ENCODE measurements at regions of chr11 and their contacts with region 1.

Region 1: GRCh38 chr11:66694732-66695207 is 17.1 kb upstream of the RBM4B start:
- DNase-seq: peak; percentile 89
- ATAC-seq: peak; percentile 80

Region 2: GRCh38 chr11:66834501-66834845 is 139.7 kb after region 1 on chr11:
- intact Hi-C with region 1: loop called (anchors 1 kb)
- DNase-seq: no peak
- ATAC-seq: no peak